ENCODE measurements at regions of chr1 and their contacts with region 1.

Region 1: GRCh38 chr1:244047621-244048471 is 3.2 kb upstream of the ZBTB18 start:
- DNase-seq: peak; percentile 97
- H3K4me3 ChIP-seq: peak overlapping the region; percentile 69
- H3K27ac ChIP-seq: peak overlapping the region; percentile 82
- H3K4me1 ChIP-seq: peaks cover 42% of the 10 kb centered on the region
- H3K27me3 ChIP-seq: no peaks in the 10 kb centered on the region
- CTCF ChIP-seq: 0 out of 2 replicates have a peak, but pooled peaks have one; percentile 14

Region 2: DNA sequence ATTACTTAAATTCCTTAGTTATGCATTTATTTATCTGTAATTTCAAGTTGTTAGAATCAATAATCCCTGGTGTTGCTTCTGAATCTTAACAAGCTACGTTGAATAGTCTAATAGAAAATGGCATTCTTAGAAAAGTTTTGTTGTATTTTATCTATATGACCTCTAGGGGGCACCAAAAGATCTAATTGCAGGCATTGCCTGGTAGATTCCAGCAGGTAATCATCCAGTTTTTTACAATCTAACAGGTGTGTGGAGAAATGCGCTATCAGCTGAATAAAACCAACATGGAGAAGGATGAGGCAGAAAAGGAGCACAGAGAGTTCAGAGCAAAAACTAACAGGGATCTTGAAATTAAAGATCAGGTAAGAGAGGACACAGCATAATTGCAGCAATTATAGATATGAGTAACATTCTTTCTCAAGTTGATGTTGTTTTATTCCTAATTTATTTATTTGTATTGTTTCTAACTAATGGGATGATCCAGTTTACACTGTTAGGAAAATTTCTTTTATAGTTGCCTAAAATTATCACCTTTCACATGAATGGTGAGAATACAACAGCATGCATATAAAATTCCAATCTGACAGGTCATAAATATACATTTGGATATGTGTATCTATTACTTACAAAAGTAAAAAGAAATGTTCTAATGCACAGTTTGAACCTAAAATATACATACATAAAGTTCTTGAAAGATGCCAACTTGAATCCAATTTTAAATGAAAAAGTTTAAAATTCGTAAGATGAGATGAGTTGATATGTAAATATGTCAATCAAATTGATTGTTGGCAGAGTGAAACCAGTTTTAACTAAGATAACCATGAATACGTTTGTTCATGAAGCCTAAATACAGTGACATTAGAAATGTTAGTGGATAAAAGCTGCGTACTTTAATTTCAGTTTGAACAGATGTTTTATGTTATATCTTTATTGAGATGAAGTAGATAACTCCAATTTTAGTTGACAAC is 703.6 kb before region 1 on chr1:
- CTCF ChIA-PET with region 1: no interaction called
- POLR2A ChIA-PET with region 1: no interaction called
- intact Hi-C with region 1: loop called (anchors 2 kb)
- DNase-seq: peak in 1 of 2 experiments; percentile 48
- H3K4me3 ChIP-seq: no peak overlapping the region
- H3K27ac ChIP-seq: no peak overlapping the region
- H3K4me1 ChIP-seq: no peaks in the 10 kb centered on the region
- H3K27me3 ChIP-seq: no peaks in the 10 kb centered on the region
- CTCF ChIP-seq: peak; percentile 87

Region 3: DNA sequence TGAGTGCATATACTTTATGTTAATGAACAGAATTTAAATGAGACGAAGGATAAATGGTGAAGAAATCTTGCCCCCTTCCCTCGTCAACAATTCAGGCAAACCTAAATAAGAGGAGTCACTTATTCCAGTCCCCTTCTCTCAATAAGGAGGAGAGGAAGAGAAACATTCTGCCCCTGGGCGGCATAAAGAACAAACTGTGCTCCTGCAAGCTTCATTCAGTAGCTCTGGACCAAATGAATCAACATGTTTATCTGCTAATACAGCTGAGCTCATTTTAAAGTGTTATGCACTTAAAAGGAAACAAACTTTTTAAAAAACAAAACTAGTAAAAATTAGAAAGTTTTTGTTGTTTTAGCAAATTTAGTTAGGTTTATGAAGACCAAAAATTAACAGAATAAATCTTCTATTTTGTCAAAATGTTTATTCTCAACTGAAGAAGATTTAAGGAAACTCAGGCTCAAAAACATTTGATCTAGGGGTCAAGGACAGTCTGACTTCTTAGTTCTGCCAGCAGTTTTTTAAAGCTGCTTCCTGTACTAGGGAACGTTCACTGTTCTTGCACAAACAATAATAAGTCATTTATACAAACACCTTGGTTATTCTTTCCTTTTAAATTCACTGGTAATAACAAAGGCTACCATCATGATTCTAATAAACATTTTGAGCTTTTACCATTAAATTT is 256.1 kb before region 1 on chr1:
- CTCF ChIA-PET with region 1: interaction called, 11 read pairs
- POLR2A ChIA-PET with region 1: no interaction called
- intact Hi-C with region 1: no loop called
- DNase-seq: no peak
- H3K4me3 ChIP-seq: no peak overlapping the region
- H3K27ac ChIP-seq: no peak overlapping the region
- H3K4me1 ChIP-seq: peaks cover 29% of the 10 kb centered on the region
- H3K27me3 ChIP-seq: no peaks in the 10 kb centered on the region
- CTCF ChIP-seq: no peak

Region 4: DNA sequence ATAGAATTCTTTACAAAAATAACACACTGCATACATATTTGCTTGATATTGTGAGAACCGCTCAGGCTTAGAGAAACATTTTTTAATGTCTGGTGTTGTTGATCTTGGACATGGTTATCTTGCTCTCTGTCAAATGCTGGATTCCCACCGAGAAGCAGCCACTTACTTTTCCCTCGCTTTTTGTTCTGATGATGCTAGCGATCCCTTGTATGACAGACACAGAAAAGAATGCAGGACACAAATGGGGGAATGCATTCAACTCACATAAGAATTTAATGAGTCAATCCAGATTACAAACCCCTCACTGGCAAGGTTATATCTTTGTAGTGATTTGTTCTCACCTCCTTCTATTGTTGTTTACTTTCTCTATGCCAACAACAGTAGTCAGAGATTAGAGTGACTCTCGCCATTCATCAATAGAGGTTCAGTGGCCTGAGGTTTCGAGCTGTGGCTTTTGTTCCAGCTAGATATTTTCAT is 121.0 kb before region 1 on chr1:
- CTCF ChIA-PET with region 1: no interaction called
- POLR2A ChIA-PET with region 1: interaction called, 10 read pairs
- intact Hi-C with region 1: loop called (anchors 1 kb)
- DNase-seq: peak; percentile 56 to 100
- H3K4me3 ChIP-seq: no peak overlapping the region
- H3K27ac ChIP-seq: peak overlapping the region; percentile 97
- H3K4me1 ChIP-seq: peaks cover 67% of the 10 kb centered on the region
- H3K27me3 ChIP-seq: no peaks in the 10 kb centered on the region
- CTCF ChIP-seq: no peak

Region 5: DNA sequence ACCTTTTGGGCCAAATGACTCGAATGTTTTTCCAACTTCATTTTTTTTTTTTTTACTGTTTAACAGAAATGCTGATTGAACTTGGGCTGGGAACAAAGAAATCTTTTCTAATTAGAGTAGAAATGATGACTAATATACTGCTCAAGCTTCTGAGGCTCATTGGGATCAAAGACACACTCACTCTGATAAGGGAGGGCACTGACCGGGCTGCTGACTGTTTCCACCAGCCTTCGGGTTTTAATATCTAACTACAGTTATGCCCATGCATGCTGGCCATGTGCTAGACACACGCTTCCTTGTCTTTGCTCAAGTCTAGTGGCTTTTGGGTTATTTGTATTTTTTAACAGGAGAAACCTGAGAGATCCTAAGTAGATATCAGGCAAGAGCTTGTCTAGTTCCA is 20.0 kb after region 1 on chr1:
- CTCF ChIA-PET with region 1: no interaction called
- POLR2A ChIA-PET with region 1: no interaction called
- intact Hi-C with region 1: no loop called
- DNase-seq: no peak
- H3K4me3 ChIP-seq: no peak overlapping the region
- H3K27ac ChIP-seq: no peak overlapping the region
- H3K4me1 ChIP-seq: no peaks in the 10 kb centered on the region
- H3K27me3 ChIP-seq: no peaks in the 10 kb centered on the region
- CTCF ChIP-seq: no peak

Region 6: DNA sequence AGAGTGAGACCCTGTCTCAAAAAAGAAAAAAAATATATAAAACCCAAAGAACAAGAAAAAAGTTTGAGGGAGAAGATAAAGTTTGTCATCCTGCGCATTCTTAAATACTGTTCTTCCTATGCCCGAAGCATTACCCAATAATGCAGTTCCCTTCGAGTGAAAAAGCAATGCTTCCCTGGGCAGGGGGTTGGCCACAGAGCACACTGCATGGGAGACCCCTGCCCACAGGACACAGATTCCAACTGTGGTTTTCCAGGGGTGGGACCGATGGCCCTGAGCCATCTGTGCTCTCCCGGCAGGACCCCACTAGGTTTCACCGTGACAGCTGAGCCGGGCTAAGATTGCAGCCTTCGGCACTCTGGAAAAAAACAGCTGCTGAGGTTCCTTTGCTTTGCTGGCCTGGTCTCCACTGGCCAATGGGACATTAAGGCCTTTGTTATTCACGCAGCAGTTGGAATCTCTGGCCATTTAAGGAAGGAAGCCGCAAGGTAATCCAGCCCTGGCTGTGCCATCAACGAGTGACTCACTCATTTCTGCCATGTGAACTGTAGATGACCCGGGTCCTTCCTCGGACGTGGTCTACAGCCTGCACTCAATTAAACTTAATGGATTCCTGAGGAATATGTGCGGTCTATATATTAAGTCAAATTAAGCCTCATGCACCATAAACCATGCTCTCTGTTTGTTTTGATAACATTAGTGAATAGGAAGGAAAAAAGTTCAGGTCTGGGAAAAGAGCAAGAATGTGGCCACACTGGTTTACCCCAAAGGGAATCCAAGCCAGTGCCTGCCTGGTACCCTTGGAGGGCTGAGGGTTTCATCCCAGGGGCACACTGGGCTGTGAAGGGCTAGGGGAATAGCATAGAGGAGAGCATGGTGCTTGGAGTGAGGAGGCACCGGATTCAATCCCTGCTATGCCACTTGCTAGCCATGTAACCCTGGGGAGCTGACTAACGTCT is 166.4 kb after region 1 on chr1:
- CTCF ChIA-PET with region 1: no interaction called
- POLR2A ChIA-PET with region 1: no interaction called
- intact Hi-C with region 1: loop called (anchors 1 kb)
- DNase-seq: peak; percentile 81 to 99
- H3K4me3 ChIP-seq: peak overlapping the region; percentile 31; the same call in 1 of the 2 replicates
- H3K27ac ChIP-seq: peak overlapping the region; percentile 93
- H3K4me1 ChIP-seq: peaks cover 30% of the 10 kb centered on the region
- H3K27me3 ChIP-seq: no peaks in the 10 kb centered on the region
- CTCF ChIP-seq: no peak

Region 7: GRCh38 chr1:244341455-244342450 is 293.9 kb after region 1 on chr1:
- CTCF ChIA-PET with region 1: no interaction called
- POLR2A ChIA-PET with region 1: no interaction called
- intact Hi-C with region 1: no loop called
- DNase-seq: peak in 1 of 2 experiments; percentile 64
- H3K4me3 ChIP-seq: no peak overlapping the region
- H3K27ac ChIP-seq: peak overlapping the region; percentile 38; the same call in 1 of the 2 replicates
- H3K4me1 ChIP-seq: peaks cover 13% of the 10 kb centered on the region
- H3K27me3 ChIP-seq: no peaks in the 10 kb centered on the region
- CTCF ChIP-seq: no peak

Region 8: DNA sequence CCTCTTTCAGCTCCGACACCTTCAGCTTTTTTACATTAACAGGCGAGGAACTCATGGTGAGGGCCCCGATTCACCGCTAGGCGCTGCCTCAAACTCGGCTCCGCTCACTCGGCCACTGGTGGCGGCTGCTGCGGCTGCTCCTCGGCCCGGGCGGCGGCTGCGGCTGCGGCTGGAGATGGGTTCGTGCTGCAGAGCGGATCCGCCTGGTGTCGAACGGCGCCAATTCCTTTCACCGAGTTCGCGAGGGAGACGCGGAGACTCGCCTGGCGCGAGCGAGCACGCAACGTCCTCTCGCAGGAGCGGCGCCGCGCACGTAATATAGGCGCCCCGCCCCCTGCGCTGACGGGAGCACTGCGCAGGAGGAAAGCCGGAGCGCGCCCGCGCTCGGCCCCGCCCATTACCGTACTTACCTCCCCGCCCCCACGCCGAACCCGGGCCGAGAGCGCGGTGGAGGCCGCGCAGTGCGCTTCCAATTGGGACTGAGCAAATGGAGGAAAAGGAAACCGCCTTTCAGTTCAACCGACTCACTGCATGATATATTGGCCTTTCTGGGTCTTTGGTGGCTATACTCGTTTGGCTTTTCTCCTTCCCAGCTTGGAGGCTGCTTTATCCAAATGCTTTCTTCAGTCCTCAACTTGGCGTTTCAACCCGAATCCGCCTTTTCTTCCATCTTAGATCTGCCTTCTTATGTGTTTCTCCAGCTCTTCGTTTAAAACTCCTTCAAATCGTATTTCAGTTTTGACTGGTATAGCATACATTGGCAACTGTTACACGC is 816.6 kb after region 1 on chr1 and contains the start of gene HNRNPU:
- CTCF ChIA-PET with region 1: no interaction called
- POLR2A ChIA-PET with region 1: no interaction called
- intact Hi-C with region 1: loop called (anchors 5 kb)
- DNase-seq: peak; percentile 84 to 97
- H3K4me3 ChIP-seq: peak within 1 kb of the TSS; percentile 98
- H3K27ac ChIP-seq: peak within 1 kb of the TSS; percentile 70
- H3K4me1 ChIP-seq: peaks cover 31% of the 10 kb centered on the region
- H3K27me3 ChIP-seq: no peaks in the 10 kb centered on the region
- CTCF ChIP-seq: peak; percentile 47; the same call in 1 of the 2 replicates
- total RNA-seq, gene HNRNPU: 291 and 376 TPM in 2 replicates

Region 9: DNA sequence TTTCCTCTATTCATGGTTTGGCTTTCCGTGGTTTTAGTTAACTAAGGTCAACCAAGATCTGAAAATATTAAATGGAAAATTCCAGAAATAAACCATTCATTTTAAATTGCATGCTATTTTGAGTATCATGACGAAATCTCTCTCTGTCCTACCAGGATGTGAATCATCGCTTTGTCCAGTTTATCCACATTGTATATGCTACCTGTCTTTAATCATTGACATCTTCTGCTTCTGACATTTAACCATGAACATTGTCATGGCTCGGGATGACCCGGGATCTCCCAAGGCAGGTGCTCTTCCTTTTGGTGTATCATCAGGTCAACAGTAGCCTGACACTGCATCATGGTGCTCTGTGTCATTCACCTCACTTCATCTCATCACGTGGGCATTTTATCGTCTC is 942.0 kb after region 1 on chr1:
- CTCF ChIA-PET with region 1: no interaction called
- POLR2A ChIA-PET with region 1: no interaction called
- intact Hi-C with region 1: no loop called
- DNase-seq: peak in 1 of 2 experiments; percentile 33
- H3K4me3 ChIP-seq: no peak overlapping the region
- H3K27ac ChIP-seq: no peak overlapping the region
- H3K4me1 ChIP-seq: peaks cover 10% of the 10 kb centered on the region
- H3K27me3 ChIP-seq: no peaks in the 10 kb centered on the region
- CTCF ChIP-seq: no peak